ENCODE measurements at regions of chr4 and their contacts with region 1.

Region 1: DNA sequence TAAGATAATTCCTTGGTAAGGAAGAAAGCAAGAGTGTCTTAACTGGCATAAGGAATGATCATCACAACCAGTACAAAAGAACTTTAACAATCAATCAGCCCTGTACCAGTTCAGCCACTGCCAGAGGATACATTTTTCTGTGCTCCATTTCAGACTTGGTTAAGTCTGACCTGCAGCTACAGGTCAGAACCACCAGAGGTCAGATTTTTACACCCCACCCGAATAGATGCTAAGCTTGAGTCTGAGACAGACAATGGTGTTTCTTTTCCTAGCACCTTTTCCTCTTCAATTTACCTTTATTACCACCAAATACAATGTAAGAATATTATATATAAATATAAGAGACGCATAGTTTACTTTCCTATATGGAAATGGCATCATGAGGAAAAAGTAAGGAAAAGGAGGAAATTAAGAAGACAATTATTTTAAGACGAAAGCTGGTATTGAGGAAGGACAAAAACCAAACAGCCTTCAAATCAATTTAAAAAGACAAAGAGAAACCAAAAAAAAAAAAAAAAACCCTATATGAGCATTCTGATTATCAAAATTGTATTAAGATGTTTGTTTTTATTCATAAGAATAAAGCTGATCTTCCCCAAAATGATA is 215.3 kb upstream of the TTC29 start:
- DNase-seq: peak; percentile 76
- H3K4me3 ChIP-seq: no peak overlapping the region
- H3K27ac ChIP-seq: no peak overlapping the region
- H3K4me1 ChIP-seq: peaks cover 35% of the 10 kb centered on the region
- H3K27me3 ChIP-seq: no peaks in the 10 kb centered on the region
- CTCF ChIP-seq: peak; percentile 81

Region 2: DNA sequence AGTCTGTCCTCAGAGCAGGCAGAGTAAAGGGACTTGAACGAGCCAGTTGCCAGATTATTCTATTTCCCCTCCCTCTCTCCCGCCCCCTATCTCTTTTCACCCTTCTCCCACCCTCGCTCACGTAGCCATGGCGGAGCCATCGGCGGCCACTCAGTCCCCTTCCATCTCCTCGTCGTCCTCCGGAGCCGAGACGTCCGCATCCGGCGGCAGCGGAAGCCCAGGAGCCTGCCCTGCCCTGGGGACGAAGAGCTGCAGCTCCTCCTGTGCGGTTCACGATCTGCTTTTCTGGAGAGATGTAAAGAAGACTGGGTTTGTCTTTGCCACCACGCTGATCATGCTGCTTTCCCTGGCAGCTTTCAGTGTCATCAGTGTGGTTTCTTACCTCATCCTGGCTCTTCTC is 1785.6 kb before region 1 on chr4:
- CTCF ChIA-PET with region 1: no interaction called
- POLR2A ChIA-PET with region 1: no interaction called
- intact Hi-C with region 1: no loop called
- DNase-seq: no peak
- H3K4me3 ChIP-seq: no peak overlapping the region
- H3K27ac ChIP-seq: no peak overlapping the region
- H3K4me1 ChIP-seq: no peaks in the 10 kb centered on the region
- H3K27me3 ChIP-seq: no peaks in the 10 kb centered on the region
- CTCF ChIP-seq: no peak

Region 3: DNA sequence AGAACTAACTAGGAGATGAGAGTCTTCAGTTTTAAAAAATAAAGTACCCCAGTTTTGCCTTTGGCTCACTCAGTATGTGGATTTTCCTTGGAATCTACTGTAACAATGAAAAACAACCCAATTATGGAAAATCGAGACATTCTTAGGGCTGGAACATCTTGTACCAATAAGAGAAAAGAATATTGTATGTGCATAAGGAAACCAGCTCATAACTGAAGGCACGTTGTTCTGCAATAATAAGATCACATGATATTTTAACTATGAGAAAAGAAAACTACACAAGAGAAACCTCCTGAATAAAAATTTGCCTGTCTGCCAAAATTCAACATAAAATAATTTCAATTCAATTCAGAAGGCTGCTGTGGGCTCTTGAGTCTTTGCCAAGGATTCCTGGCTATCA is 58.1 kb after region 1 on chr4:
- CTCF ChIA-PET with region 1: no interaction called
- POLR2A ChIA-PET with region 1: no interaction called
- intact Hi-C with region 1: loop called (anchors 5 kb)
- DNase-seq: no peak
- H3K4me3 ChIP-seq: no peak overlapping the region
- H3K27ac ChIP-seq: no peak overlapping the region
- H3K4me1 ChIP-seq: no peaks in the 10 kb centered on the region
- H3K27me3 ChIP-seq: no peaks in the 10 kb centered on the region
- CTCF ChIP-seq: no peak

Region 4: GRCh38 chr4:147425019-147425418 is 264.0 kb after region 1 on chr4:
- CTCF ChIA-PET with region 1: no interaction called
- POLR2A ChIA-PET with region 1: no interaction called
- intact Hi-C with region 1: loop called (anchors 10 kb)
- DNase-seq: no peak
- H3K4me3 ChIP-seq: no peak overlapping the region
- H3K27ac ChIP-seq: no peak overlapping the region
- H3K4me1 ChIP-seq: peaks cover 6% of the 10 kb centered on the region
- H3K27me3 ChIP-seq: no peaks in the 10 kb centered on the region
- CTCF ChIP-seq: no peak

Region 5: DNA sequence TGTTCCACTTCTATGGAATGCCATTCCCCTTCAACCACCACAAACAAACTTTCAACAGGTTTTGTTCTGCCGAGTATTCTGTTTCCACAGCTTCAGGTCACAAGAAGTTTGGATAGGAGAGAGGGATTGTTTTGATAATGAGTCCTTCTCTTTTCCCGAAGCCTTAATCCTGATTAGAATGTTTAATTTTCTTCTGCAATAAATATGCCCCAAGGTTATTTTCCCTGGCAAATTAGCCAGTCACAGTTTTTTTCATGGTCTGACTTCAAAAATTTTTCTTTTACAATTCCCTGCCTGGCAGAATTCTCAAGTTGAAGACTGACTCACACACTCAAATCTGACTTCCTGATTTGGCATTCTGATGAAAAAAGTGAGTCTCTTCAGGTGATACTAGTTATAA is 286.8 kb after region 1 on chr4:
- CTCF ChIA-PET with region 1: no interaction called
- POLR2A ChIA-PET with region 1: no interaction called
- intact Hi-C with region 1: no loop called
- DNase-seq: no peak
- H3K4me3 ChIP-seq: no peak overlapping the region
- H3K27ac ChIP-seq: no peak overlapping the region
- H3K4me1 ChIP-seq: no peaks in the 10 kb centered on the region
- H3K27me3 ChIP-seq: no peaks in the 10 kb centered on the region
- CTCF ChIP-seq: no peak

Region 6: GRCh38 chr4:147518846-147519767 is 358.1 kb after region 1 on chr4:
- CTCF ChIA-PET with region 1: interaction called, 12 read pairs
- POLR2A ChIA-PET with region 1: no interaction called
- intact Hi-C with region 1: no loop called
- DNase-seq: peak; percentile 81
- H3K4me3 ChIP-seq: no peak overlapping the region
- H3K27ac ChIP-seq: no peak overlapping the region
- H3K4me1 ChIP-seq: peaks cover 22% of the 10 kb centered on the region
- H3K27me3 ChIP-seq: no peaks in the 10 kb centered on the region
- CTCF ChIP-seq: peak; percentile 96

Region 7: GRCh38 chr4:147526272-147526654 is 365.3 kb after region 1 on chr4:
- CTCF ChIA-PET with region 1: no interaction called
- POLR2A ChIA-PET with region 1: no interaction called
- intact Hi-C with region 1: loop called (anchors 5 kb)
- DNase-seq: peak; percentile 47
- H3K4me3 ChIP-seq: no peak overlapping the region
- H3K27ac ChIP-seq: no peak overlapping the region
- H3K4me1 ChIP-seq: peaks cover 31% of the 10 kb centered on the region
- H3K27me3 ChIP-seq: no peaks in the 10 kb centered on the region
- CTCF ChIP-seq: peak; percentile 49

Region 8: DNA sequence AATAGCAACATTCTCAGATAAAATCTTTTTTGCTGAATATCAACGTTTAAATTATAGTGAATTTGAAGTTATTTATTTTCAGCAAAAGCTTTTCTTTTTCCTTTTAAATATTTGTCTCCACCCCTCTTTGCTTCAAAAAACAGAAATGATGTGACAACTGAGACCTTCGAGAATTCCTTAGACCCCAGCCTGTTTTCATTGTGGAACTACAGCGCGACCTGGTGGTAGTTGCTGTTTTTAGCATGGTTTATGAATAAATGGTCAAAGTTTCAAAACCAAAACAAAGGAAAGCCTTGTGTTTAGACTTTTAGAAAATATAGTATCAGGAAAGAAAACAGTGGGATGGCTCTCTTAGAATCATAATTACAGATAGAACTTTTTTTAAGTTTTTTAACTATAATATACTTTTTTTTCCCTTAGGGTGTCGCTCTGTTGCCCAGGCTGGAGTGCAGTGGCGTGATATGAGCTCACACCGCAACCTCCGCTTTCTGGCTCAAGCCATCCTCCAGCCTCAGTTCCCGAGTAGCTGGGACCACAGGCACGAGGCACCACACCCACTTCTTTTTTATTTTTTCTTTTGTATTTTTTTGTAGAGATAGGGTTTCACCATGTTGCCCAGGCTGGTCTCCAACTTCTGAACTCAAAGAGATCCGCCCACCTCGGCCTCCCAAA is 429.4 kb after region 1 on chr4:
- CTCF ChIA-PET with region 1: interaction called, 10 read pairs
- POLR2A ChIA-PET with region 1: no interaction called
- intact Hi-C with region 1: loop called (anchors 1 kb)
- DNase-seq: peak; percentile 87
- H3K4me3 ChIP-seq: no peak overlapping the region
- H3K27ac ChIP-seq: no peak overlapping the region
- H3K4me1 ChIP-seq: peaks cover 10% of the 10 kb centered on the region
- H3K27me3 ChIP-seq: no peaks in the 10 kb centered on the region
- CTCF ChIP-seq: peak; percentile 84

Region 9: DNA sequence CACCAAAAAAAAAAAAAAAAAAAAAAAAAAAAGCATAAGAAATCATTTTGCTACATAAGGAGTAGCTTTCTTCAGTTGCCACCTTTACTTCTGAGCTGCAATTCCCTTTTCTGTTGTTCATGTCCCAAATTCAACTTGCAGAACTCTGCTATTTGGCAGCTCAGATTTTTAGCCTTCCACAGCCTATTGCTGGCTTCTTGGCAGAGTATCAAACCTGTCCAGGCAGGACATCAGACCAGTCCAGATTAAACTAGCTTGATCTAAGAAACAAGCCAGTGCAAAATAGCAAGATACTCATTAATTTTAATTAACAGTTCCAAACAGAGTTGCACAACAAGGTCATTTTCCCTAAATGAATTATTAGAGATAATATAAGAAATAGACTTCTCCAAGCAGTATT is 1404.8 kb after region 1 on chr4:
- CTCF ChIA-PET with region 1: no interaction called
- POLR2A ChIA-PET with region 1: no interaction called
- intact Hi-C with region 1: no loop called
- DNase-seq: no peak
- H3K4me3 ChIP-seq: no peak overlapping the region
- H3K27ac ChIP-seq: no peak overlapping the region
- H3K4me1 ChIP-seq: no peaks in the 10 kb centered on the region
- H3K27me3 ChIP-seq: no peaks in the 10 kb centered on the region
- CTCF ChIP-seq: no peak

Measured in A673 (cell line).